Upper lobe of right lung (tissue), 1 donor: ENCODE measurements at regions of chr11 and their contacts with region 1.

Region 1: DNA sequence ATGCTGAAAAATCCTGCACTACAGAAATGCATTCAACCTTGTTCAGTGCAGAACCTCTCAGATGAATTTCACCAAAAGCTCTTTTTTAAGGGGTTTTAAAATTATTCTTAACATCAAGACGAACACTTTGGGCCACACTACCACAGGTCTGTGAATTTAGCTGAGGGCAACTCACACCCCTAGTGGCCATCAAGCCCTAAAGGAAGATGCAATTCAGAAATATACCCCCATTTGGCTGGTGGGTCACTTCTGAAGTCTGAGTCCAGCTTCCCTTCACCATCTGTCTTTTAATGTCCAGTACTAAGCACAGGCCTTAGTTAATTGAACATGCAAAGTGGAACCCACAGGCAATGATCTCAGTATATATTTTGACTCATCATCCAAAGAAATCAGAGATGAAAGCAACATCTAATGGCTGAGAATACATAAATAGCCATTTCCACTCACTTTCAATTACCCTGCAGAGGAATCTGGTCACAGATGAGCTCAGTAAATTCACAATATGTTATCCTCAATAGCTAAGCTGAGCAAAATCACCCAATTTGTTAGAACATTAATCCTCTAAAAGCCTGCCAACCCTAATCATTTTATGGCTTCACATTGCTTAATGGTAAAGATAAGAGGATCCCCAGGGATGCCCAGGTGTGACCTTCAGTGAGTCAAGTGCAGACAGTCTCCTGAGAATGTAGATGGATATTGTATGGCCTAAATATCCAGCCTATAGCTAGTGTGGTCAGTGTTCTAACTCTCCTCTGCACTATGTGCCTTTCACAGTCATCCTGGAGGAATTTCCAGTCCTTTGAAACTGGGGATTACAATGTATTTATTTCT is 50.3 kb downstream of the FAM76B start:
- DNase-seq: no peak
- ATAC-seq: no peak
- H3K4me3 ChIP-seq: no peak overlapping the region
- H3K27ac ChIP-seq: no peak overlapping the region
- H3K4me1 ChIP-seq: no peaks in the 10 kb centered on the region
- H3K27me3 ChIP-seq: no peaks in the 10 kb centered on the region
- CTCF ChIP-seq: no peak

Region 2: GRCh38 chr11:96045622-96046456 is 306.5 kb after region 1 on chr11:
- intact Hi-C with region 1: no loop called
- DNase-seq: no peak
- ATAC-seq: peak; percentile 58
- H3K4me3 ChIP-seq: peak overlapping the region; percentile 8
- H3K27ac ChIP-seq: no peak overlapping the region
- H3K4me1 ChIP-seq: peaks cover 15% of the 10 kb centered on the region
- H3K27me3 ChIP-seq: no peaks in the 10 kb centered on the region
- CTCF ChIP-seq: peak; percentile 10

Region 3: DNA sequence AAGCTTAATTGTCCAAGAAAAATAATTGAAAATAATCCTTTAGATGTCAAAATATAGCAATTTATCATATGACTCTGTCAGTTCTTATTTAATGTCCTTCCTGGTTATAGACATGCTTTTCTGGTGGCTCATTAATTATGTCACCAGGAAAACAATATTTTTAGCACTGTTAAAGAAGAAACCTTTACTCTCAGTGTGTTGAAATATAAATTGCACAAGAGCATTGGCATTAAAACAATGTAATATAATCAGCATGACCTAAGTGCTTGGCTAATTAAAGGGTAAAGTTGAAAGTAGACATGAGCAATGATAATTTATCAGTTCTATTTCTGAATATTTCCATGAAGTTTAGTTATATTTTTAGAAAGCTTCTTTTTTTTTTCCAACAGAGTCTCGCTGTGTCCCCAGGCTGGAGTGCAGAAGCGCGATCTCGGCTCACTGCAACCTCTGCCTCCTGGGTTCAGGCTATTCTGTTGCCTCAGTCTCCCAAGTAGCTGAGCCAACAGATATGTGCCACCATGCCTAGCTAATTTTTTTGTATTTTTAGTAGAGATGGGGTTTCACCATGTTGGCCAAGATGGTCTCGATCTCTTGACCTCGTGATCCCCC is 882.8 kb after region 1 on chr11:
- intact Hi-C with region 1: loop called (anchors 10 kb)
- DNase-seq: no peak
- ATAC-seq: no peak
- H3K4me3 ChIP-seq: no peak overlapping the region
- H3K27ac ChIP-seq: no peak overlapping the region
- H3K4me1 ChIP-seq: no peaks in the 10 kb centered on the region
- H3K27me3 ChIP-seq: no peaks in the 10 kb centered on the region
- CTCF ChIP-seq: no peak